ENCODE measurements at regions of chr3 and their contacts with region 1.

Region 1: GRCh38 chr3:151362751-151363174 is 21.8 kb downstream of the P2RY12 start:
- DNase-seq: no peak
- CTCF ChIP-seq: no peak

Region 2: GRCh38 chr3:151379083-151379734 is 16.4 kb after region 1 on chr3:
- CTCF ChIA-PET with region 1: interaction called, 10 read pairs
- POLR2A ChIA-PET with region 1: no interaction called
- DNase-seq: no peak
- CTCF ChIP-seq: peak; percentile 56

Measured in GM10248 (cell line).